ENCODE measurements at regions of chr4 and their contacts with region 1.

Region 1: DNA sequence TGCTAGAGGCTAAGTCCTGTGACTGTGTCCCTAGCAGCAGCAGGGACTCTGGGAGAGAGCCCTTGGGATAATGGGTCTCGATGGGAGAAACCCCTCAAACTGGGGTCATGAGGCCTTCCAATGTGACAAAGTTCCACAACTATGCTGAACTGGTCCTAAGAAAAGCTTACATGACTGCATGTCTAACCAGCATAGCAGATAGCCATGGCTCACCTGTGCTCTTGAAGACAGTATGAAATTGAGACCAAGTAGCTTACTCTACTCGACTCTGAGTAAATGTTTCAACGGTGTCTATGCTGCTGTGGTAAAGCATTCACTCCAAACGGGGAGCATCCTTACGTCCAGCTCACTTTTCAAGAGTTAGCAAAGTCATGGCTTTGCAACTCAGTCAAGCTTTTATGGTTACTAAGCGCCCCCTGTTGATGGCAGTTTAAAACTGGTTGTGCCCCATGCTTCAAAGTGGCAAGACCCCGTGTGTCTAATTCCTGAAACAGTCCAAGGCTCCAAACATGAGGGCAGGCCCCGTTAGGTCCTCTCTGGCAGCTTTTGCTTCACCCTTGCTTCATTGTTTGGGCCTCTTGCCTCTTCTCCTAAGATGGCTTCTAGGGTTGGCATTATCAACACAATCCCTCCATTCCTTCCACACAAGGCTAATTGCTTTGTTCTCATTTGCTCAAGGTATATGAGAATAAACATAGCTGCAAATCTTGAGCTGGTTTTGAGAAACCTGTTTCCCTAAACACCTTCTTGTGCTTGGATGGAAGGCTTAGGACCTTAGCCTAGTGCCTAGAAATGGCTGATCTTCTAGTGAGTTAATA is 46.6 kb downstream of the CCNG2 start:
- DNase-seq: peak; percentile 45 to 68 (median 63)
- H3K4me3 ChIP-seq: no peak overlapping the region
- H3K4me3 Mint-ChIP-seq: no peak overlapping the region
- H3K27ac ChIP-seq: no peak overlapping the region
- H3K27ac Mint-ChIP-seq: no peak overlapping the region
- H3K4me1 ChIP-seq: no peaks in the 10 kb centered on the region
- H3K4me1 Mint-ChIP-seq: no peaks in the 10 kb centered on the region
- H3K27me3 ChIP-seq: no peaks in the 10 kb centered on the region
- H3K27me3 Mint-ChIP-seq: no peaks in the 10 kb centered on the region

Region 2: DNA sequence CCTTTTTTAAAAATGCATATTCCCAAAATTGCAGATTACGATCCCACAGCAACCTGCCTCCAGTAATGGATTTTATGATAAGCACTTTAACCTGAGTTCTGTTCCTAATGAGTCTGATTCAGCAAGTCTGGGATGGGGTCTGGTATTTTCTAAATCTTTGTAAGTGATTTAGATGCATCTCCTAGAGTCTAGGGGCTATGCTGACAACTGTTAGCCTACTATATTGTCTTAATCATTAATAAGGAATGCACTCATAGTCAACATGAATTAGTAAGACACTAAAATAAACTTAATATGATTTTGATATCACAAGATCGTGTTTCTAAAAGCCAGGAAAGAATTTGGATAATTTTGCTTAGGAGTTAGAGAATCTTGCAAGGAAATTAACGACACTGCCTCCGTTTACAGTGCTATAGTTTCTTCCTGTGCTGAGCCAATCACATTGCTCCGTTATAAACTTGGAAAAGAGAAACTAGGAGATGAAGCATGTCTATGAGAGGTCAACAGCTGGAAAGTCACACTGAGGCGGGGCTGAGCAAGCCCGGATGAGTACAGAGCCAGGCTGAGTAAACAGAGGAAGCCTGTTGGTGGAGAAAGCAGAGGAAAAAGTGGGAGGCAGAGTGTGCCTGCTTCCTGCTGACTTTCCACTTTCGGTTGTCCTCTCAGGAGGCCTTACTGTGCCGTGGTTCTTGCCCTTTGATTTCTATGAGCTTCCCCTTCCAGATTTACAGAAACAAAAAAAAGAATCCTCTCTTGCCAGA is 995.4 kb before region 1 on chr4:
- CTCF ChIA-PET with region 1: no interaction called
- POLR2A ChIA-PET with region 1: no interaction called
- intact Hi-C with region 1: no loop called
- DNase-seq: no peak
- H3K4me3 ChIP-seq: no peak overlapping the region
- H3K4me3 Mint-ChIP-seq: no peak overlapping the region
- H3K27ac ChIP-seq: no peak overlapping the region
- H3K27ac Mint-ChIP-seq: peak overlapping the region in 4 of 7 donors; percentile 9 to 44 (median 37)
- H3K4me1 ChIP-seq: peaks cover 30% of the 10 kb centered on the region
- H3K4me1 Mint-ChIP-seq: peaks cover 46 to 77% (median 61%) of the 10 kb centered on the region in 4 donors
- H3K27me3 ChIP-seq: no peaks in the 10 kb centered on the region
- H3K27me3 Mint-ChIP-seq: no peaks in the 10 kb centered on the region

Region 3: GRCh38 chr4:76511947-76512346 is 691.6 kb before region 1 on chr4:
- CTCF ChIA-PET with region 1: interaction called, 13 read pairs
- POLR2A ChIA-PET with region 1: no interaction called
- intact Hi-C with region 1: no loop called
- DNase-seq: no peak
- H3K4me3 ChIP-seq: no peak overlapping the region
- H3K4me3 Mint-ChIP-seq: no peak overlapping the region
- H3K27ac ChIP-seq: no peak overlapping the region
- H3K27ac Mint-ChIP-seq: no peak overlapping the region
- H3K4me1 ChIP-seq: no peaks in the 10 kb centered on the region
- H3K4me1 Mint-ChIP-seq: no peaks in the 10 kb centered on the region
- H3K27me3 ChIP-seq: no peaks in the 10 kb centered on the region
- H3K27me3 Mint-ChIP-seq: no peaks in the 10 kb centered on the region

Region 4: DNA sequence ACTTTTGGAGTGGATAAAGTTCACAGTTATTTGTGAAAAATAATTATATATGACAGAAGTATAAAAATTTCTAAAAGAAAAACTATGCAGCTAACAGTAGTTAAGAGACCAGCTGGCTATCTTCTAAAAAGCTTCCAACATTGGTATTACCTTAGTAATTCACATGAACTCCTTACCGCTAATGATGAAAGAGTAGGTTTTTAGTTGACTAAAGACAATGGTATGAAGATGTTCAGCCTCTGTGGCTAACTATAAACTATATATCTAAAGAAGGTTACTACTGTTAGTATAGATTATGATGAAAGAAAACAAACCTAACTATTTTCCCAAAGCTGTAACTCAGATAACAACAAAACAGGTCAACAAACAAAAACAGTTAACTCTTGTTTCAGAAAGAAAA is 138.2 kb before region 1 on chr4:
- CTCF ChIA-PET with region 1: interaction called, 10 read pairs
- POLR2A ChIA-PET with region 1: no interaction called
- intact Hi-C with region 1: no loop called
- DNase-seq: no peak
- H3K4me3 ChIP-seq: no peak overlapping the region
- H3K4me3 Mint-ChIP-seq: no peak overlapping the region
- H3K27ac ChIP-seq: no peak overlapping the region
- H3K27ac Mint-ChIP-seq: peak overlapping the region in 2 of 7 donors; percentile 38 to 46
- H3K4me1 ChIP-seq: peaks cover 41% of the 10 kb centered on the region
- H3K4me1 Mint-ChIP-seq: peaks cover 16 to 48% (median 25%) of the 10 kb centered on the region in 4 donors
- H3K27me3 ChIP-seq: no peaks in the 10 kb centered on the region
- H3K27me3 Mint-ChIP-seq: no peaks in the 10 kb centered on the region

Region 5: GRCh38 chr4:77104791-77105540 is 98.6 kb before region 1 on chr4:
- CTCF ChIA-PET with region 1: interaction called, 440 read pairs
- POLR2A ChIA-PET with region 1: no interaction called
- intact Hi-C with region 1: no loop called
- DNase-seq: no peak
- H3K4me3 ChIP-seq: no peak overlapping the region
- H3K4me3 Mint-ChIP-seq: no peak overlapping the region
- H3K27ac ChIP-seq: no peak overlapping the region
- H3K27ac Mint-ChIP-seq: no peak overlapping the region
- H3K4me1 ChIP-seq: peaks cover 10% of the 10 kb centered on the region
- H3K4me1 Mint-ChIP-seq: peaks cover 9 to 11% (median 10%) of the 10 kb centered on the region in 4 donors
- H3K27me3 ChIP-seq: no peaks in the 10 kb centered on the region
- H3K27me3 Mint-ChIP-seq: peaks cover 5 to 6% of the 10 kb centered on the region in 2 donors

Region 6: DNA sequence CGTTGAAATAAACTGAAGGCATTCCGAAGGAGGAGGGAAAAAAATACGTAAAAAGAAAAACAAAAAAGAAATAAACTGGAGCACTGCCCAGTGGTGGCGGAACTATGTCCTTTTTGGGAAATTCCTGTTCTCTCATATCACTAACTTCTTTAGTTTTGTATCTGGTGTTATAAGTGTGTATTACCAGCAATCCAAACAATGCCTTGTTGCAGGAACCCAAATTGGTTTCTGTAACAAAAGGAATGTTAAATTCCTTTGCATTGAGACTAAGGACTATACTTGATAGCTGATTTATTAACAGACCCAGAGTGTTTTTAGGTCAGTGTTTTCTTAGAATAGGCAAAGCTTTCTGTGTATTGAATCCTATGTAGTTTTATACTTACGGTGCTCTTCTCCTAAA is 40.0 kb before region 1 on chr4:
- CTCF ChIA-PET with region 1: interaction called, 25 read pairs
- POLR2A ChIA-PET with region 1: no interaction called
- intact Hi-C with region 1: no loop called
- DNase-seq: no peak
- H3K4me3 ChIP-seq: no peak overlapping the region
- H3K4me3 Mint-ChIP-seq: no peak overlapping the region
- H3K27ac ChIP-seq: no peak overlapping the region
- H3K27ac Mint-ChIP-seq: no peak overlapping the region
- H3K4me1 ChIP-seq: peaks cover 7% of the 10 kb centered on the region
- H3K4me1 Mint-ChIP-seq: peaks cover 10 to 32% (median 16%) of the 10 kb centered on the region in 4 donors
- H3K27me3 ChIP-seq: no peaks in the 10 kb centered on the region
- H3K27me3 Mint-ChIP-seq: no peaks in the 10 kb centered on the region

Measured in CD4-positive, alpha-beta memory T cell (primary cell).